HepG2 (cell line): ENCODE measurements at regions of chr1 and their contacts with region 1.

Region 1: DNA sequence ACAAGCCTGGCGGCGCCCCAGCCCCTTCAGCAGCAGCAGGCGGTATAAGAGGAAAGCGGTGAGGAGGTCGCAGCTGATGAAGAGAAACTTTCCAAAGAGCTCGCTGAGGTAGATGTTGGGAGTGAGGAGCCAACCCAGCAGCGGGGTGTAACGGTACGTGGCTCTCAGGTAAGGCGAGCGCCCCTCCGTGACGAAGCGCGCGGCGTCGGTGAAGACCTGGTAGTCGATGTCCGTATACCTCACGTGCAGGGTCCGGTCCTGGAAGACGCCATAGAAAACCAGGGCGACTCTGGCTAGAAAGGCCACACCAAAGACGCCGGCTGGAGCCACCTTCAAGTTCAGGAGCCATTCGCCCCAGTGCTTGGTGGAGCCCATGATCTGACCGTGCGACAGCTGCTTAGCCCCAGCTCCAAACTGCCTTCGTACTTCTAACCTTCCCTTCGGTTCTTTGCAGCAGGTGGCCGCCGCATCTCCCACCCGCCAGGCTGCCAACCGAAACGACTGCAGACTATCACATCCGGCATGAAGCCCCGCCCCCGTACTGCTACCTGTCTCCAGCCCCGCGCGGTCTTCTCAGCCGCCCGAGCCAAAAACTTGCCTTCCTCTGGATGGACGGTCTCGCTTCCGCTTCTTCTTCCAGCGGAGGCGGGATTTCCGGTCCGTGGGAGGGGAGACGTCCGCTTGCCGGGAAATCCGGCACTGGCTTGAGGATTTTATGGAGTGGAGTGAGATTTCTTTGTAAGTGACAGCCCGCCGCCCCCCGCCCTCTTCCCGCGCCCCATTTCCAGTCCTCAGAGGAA is at the start of gene PIGM:
- DNase-seq: peak; percentile 94
- ATAC-seq: peak; percentile 98
- H3K4me3 ChIP-seq: peak within 1 kb of the TSS; percentile 72 to 92 (median 84)
- H3K27ac ChIP-seq: peak within 1 kb of the TSS; percentile 76
- H3K4me1 ChIP-seq: peaks cover 28% of the 10 kb centered on the region
- H3K27me3 ChIP-seq: no peaks in the 10 kb centered on the region; a peak in 1 of 5 replicates
- CTCF ChIP-seq: peak; percentile 17; the same call in 1 of the 2 replicates
- EP300 ChIP-seq: 0 out of 4 replicates have a peak, but pooled peaks of 1 of the 2 experiments have one; percentile 16
- POLR2A ChIP-seq: peak; percentile 53 to 78; a peak in 3 of 4 replicates
- RAD21 ChIP-seq: no peak
- total RNA-seq, gene PIGM: 2.9 and 4.6 TPM in 2 replicates

Region 2: GRCh38 chr1:159991513-159991912 is 40.1 kb before region 1 on chr1:
- CTCF ChIA-PET with region 1: no interaction called
- POLR2A ChIA-PET with region 1: no interaction called
- in situ Hi-C with region 1: no loop called
- intact Hi-C with region 1: no loop called
- DNase-seq: peak; percentile 7
- ATAC-seq: no peak; the same call in none of the 3 replicates
- H3K4me3 ChIP-seq: no peak overlapping the region
- H3K27ac ChIP-seq: no peak overlapping the region
- H3K4me1 ChIP-seq: peaks cover 8% of the 10 kb centered on the region; the same call in 1 of the 2 replicates
- H3K27me3 ChIP-seq: no peaks in the 10 kb centered on the region
- CTCF ChIP-seq: no peak
- EP300 ChIP-seq: no peak
- POLR2A ChIP-seq: no peak
- RAD21 ChIP-seq: no peak

Region 3: GRCh38 chr1:160053548-160054365 is 22.2 kb after region 1 on chr1:
- CTCF ChIA-PET with region 1: no interaction called
- POLR2A ChIA-PET with region 1: interaction called, 3 read pairs
- in situ Hi-C with region 1: no loop called
- intact Hi-C with region 1: loop called (anchors 2 kb)
- DNase-seq: peak; percentile 99
- ATAC-seq: peak; percentile 94
- H3K4me3 ChIP-seq: peak overlapping the region; percentile 4 to 56 (median 14); a peak in 2 of 6 replicates
- H3K27ac ChIP-seq: peak overlapping the region; percentile 83
- H3K4me1 ChIP-seq: peaks cover 95% of the 10 kb centered on the region
- H3K27me3 ChIP-seq: no peaks in the 10 kb centered on the region
- CTCF ChIP-seq: 0 out of 2 replicates have a peak, but pooled peaks have one; percentile 4
- EP300 ChIP-seq: peak; percentile 3 to 95; a peak in 2 of 4 replicates
- POLR2A ChIP-seq: no peak
- RAD21 ChIP-seq: no peak

Region 4: GRCh38 chr1:160070243-160071163 is 38.9 kb after region 1 on chr1:
- CTCF ChIA-PET with region 1: no interaction called
- POLR2A ChIA-PET with region 1: interaction called, 6 read pairs
- in situ Hi-C with region 1: no loop called
- intact Hi-C with region 1: loop called (anchors 1 kb)
- DNase-seq: peak; percentile 81
- ATAC-seq: peak; percentile 95
- H3K4me3 ChIP-seq: peak overlapping the region; percentile 80 to 87 (median 83)
- H3K27ac ChIP-seq: peak overlapping the region; percentile 39
- H3K4me1 ChIP-seq: peaks cover 83% of the 10 kb centered on the region
- H3K27me3 ChIP-seq: no peaks in the 10 kb centered on the region; a peak in 1 of 5 replicates
- CTCF ChIP-seq: no peak
- EP300 ChIP-seq: no peak
- POLR2A ChIP-seq: peak in 1 of 2 experiments; percentile 46; a peak in 1 of 4 replicates
- RAD21 ChIP-seq: no peak

Region 5: DNA sequence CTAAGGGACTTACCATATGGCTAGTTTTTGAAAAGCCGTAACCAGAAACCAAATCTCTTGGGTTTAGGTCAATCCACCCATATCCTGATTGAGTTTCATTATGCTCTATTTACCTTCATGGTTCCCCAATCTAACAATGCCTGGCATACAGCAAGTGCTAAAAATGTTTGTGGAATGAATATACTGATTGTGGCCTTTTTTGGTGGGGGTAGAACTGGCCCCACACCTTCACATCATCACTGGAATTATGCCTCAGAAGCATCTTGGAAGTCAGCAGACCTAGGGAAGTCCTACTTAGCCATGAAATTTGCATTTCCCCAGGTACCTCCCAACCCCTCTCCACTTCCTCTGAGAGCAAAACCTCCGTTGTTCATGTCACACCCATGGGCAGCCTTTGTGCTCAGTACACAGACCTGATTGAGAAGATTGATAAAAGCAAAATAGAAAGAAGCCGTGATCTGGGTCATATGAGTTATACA is 633.0 kb after region 1 on chr1:
- CTCF ChIA-PET with region 1: no interaction called
- POLR2A ChIA-PET with region 1: no interaction called
- in situ Hi-C with region 1: no loop called
- intact Hi-C with region 1: no loop called
- DNase-seq: no peak
- ATAC-seq: no peak
- H3K4me3 ChIP-seq: no peak overlapping the region
- H3K27ac ChIP-seq: no peak overlapping the region
- H3K4me1 ChIP-seq: 0 out of 2 replicates have a peak, but pooled peaks cover 8% of the 10 kb centered on the region
- H3K27me3 ChIP-seq: no peaks in the 10 kb centered on the region
- CTCF ChIP-seq: no peak
- EP300 ChIP-seq: no peak
- POLR2A ChIP-seq: no peak
- RAD21 ChIP-seq: no peak